AG04450 (cell line): ENCODE measurements at regions of chr16 and their contacts with region 1.

Region 1: DNA sequence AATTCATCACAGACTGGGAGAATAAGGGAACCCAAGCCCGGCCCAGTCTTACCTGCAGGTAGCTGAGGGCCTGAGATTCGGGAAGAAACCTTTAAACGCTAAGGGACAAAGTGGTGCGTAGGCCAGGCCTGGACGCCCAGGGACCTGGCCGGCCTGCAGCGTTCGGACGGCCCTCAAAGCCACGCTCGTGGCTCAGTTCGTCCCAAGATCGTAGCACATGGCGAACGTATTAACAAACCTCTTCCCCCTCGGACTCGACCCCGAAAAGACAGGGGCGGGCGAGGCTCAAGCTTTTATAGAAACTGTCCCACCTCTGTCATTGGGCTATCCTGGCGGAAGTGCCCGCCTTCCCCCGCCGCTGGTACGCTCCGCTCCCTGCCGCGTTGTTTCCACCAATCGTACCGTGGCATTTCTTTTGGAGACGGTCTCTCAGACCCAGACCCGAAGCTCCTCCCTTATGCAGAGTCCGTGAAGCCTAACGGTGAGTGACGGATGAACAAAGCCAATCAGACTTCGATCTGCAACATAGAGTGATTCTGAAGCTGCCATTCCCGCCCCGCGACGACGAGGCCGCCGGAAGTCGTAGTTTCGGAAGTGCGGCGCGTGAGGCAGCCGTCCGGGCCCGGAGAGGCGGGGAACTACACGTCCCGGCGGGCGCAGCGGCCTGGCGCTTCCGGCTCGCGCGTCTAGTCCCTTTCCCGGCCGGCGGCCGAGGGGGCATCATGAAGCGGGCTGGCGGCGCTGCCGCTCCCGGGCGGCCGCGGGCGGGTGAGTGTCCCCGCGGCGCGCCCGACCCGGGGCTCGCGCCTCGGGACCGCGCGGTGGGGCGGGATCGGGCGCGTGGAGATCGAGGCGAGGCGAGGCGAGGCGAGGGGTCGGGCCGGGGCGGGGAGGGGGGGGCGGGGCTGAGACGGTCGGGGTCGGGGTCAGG is at the start of gene TRAF7:
- DNase-seq: peak; percentile 100
- H3K4me3 ChIP-seq: peak within 1 kb of the TSS; percentile 99
- H3K27ac ChIP-seq: peak within 1 kb of the TSS; percentile 73
- H3K27me3 ChIP-seq: no peaks in the 10 kb centered on the region
- CTCF ChIP-seq: no peak
- polyA plus RNA-seq, gene TRAF7: 35.2 and 49.3 TPM in 2 replicates

Region 2: DNA sequence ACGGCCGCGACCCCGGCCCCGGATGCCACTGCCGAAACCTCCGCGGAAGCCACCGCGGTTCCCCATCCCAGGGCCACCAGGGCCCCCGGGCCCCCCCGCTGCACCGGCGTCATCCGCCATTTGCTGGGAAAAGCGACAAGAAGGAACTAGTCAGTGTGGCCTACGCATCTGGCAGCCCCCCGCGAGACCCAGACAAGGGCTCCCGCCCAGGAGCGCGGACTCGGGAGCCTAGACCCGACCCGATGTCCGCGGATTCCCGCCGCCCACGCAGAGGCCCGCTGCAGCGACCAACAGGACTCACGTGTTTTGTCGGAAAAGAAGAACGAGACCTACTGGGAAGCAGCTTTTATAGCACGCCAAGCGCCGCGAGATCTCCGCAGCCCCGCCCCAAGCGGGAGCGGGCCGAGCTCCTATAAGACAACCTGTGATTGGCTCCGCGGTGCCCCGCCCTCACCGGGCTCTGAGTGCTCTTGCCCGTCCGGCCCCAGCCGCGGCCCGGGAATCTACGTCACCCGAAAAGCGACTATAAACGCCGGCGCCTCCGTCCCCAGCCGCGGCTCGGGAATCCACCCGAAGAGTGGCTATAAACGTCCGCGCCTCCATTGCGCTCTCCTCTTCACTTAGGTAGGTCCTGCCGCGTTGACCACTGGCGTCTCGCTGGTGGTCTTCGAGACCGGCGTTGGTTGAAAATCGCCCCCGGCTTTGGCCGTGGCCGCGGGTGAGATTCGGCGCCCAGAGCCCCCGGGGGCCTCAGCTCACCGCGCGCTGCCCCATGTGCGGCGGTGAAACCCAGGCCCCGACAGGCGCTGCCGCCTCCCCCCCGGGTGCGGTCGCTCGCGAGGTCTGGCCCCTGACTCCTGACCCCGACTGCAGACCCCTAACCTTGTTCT is 190.6 kb before region 1 on chr16 and contains the start of gene RPS2:
- CTCF ChIA-PET with region 1: no interaction called
- POLR2A ChIA-PET with region 1: interaction called, 20 read pairs
- DNase-seq: peak; percentile 98
- H3K4me3 ChIP-seq: peak within 1 kb of the TSS; percentile 90
- H3K27ac ChIP-seq: peak within 1 kb of the TSS; percentile 91
- H3K27me3 ChIP-seq: no peaks in the 10 kb centered on the region
- CTCF ChIP-seq: no peak
- polyA plus RNA-seq, gene RPS2: 2,494 and 4,570 TPM in 2 replicates

Region 3: DNA sequence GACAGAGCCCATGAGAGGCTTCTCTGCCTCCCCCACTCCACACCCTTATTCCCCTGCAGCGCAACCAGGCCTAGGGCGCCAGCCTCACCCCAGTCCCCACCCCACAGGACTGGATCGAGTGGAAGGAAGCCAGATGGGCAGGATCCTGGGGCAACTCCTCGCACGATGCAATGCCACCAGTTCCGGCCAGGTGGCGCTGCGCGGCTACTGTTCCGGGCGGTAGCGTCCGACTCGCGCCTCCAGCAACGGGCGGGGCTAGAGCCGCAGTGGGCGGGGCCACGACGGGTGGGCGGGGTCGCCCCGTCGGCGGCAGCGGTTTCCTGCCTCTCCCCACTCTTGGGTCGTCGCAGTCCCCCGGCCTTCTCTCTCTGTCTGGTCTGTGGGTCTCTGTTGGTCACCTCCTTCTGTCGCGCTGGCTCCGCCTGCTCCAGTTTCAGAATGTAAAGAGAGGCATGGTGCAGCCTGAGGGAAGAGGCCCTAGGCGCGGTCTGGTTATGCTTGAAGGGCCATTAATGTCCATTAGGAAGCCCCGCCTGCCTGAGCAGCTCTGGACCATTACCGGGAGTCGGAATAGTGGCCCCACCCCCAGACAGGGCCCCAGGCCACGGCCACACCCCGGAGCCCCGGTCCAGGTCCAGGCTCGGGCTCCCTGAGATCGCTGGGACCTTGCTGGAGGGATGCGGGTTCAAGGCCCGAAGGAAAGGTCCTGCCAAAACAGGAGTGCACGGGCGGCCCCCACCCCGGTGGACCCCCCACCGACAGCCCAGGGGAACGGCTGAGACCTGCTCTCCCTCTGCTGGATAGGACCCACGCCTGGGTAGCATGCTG is 132.0 kb before region 1 on chr16:
- CTCF ChIA-PET with region 1: interaction called, 4 read pairs
- POLR2A ChIA-PET with region 1: interaction called, 22 read pairs
- DNase-seq: peak; percentile 66
- H3K4me3 ChIP-seq: peak overlapping the region; percentile 40
- H3K27ac ChIP-seq: peak overlapping the region; percentile 21
- H3K27me3 ChIP-seq: peaks cover 5% of the 10 kb centered on the region
- CTCF ChIP-seq: peak; percentile 87

Region 4: DNA sequence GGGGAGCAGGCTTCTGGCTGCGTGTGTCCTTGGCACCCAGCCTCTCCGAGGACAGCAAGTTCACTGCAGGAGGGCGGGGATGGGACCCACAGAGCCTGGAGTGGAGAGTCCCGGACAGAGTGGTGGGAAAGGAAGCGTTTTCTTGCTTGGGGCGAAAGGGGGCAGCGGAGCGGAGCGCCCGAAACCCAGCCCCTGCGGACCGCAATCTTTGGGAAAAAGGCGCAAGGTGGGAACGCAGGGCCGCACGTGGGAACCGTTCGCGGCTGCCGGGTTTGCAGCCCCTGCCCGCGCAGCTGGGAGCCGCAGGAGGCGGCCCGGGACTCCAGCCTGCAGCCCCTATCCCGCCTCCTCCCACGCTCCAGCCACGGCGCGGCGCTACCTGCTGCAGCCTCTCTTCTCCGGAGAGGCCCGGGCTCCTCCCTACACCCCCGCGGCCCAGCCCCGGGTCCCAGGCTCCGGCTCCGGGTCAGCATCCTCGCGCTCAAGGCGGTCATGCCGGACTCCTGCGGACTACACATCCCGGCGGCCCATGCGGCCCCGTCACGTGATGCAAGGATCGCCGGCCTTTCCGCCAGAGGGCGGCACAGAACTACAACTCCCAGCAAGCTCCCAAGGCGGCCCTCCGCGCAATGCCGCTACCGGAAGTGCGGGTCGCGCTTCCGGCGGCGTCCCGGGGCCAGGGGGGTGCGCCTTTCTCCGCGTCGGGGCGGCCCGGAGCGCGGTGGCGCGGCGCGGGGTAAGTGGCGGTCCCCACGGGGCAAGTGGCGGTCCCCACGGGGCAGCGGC is 107.8 kb before region 1 on chr16 and contains the starts of genes NTHL1 and TSC2:
- CTCF ChIA-PET with region 1: no interaction called
- POLR2A ChIA-PET with region 1: interaction called, 12 read pairs
- DNase-seq: peak; percentile 88
- H3K4me3 ChIP-seq: peak within 1 kb of the TSS; percentile 85
- H3K27ac ChIP-seq: peak within 1 kb of the TSS; percentile 31
- H3K27me3 ChIP-seq: no peaks in the 10 kb centered on the region
- CTCF ChIP-seq: peak; percentile 44
- polyA plus RNA-seq, gene NTHL1: 10.7 and 14.5 TPM in 2 replicates
- polyA plus RNA-seq, gene TSC2: 35.9 and 42.2 TPM in 2 replicates

Region 5: GRCh38 chr16:2166757-2167638 is 11.6 kb after region 1 on chr16:
- CTCF ChIA-PET with region 1: interaction called, 7 read pairs
- POLR2A ChIA-PET with region 1: interaction called, 15 read pairs
- DNase-seq: no peak
- H3K4me3 ChIP-seq: no peak overlapping the region
- H3K27ac ChIP-seq: no peak overlapping the region
- H3K27me3 ChIP-seq: no peaks in the 10 kb centered on the region
- CTCF ChIP-seq: no peak

Region 6: GRCh38 chr16:2205104-2205966 is 50.0 kb after region 1 on chr16 and contains the start of gene MLST8:
- CTCF ChIA-PET with region 1: no interaction called
- POLR2A ChIA-PET with region 1: interaction called, 17 read pairs
- DNase-seq: peak; percentile 78
- H3K4me3 ChIP-seq: peak within 1 kb of the TSS; percentile 95
- H3K27ac ChIP-seq: peak within 1 kb of the TSS; percentile 70
- H3K27me3 ChIP-seq: peaks cover 2% of the 10 kb centered on the region
- CTCF ChIP-seq: no peak
- polyA plus RNA-seq, gene MLST8: 41.1 and 55.1 TPM in 2 replicates

Region 7: GRCh38 chr16:2278272-2278608 is 122.9 kb after region 1 on chr16:
- CTCF ChIA-PET with region 1: no interaction called
- POLR2A ChIA-PET with region 1: no interaction called
- DNase-seq: no peak
- H3K4me3 ChIP-seq: no peak overlapping the region
- H3K27ac ChIP-seq: no peak overlapping the region
- H3K27me3 ChIP-seq: peaks cover 57% of the 10 kb centered on the region
- CTCF ChIP-seq: no peak

Region 8: GRCh38 chr16:2487903-2488531 is 332.7 kb after region 1 on chr16:
- CTCF ChIA-PET with region 1: no interaction called
- POLR2A ChIA-PET with region 1: interaction called, 10 read pairs
- DNase-seq: no peak
- H3K4me3 ChIP-seq: no peak overlapping the region
- H3K27ac ChIP-seq: no peak overlapping the region
- H3K27me3 ChIP-seq: no peaks in the 10 kb centered on the region
- CTCF ChIP-seq: no peak